ENCODE measurements at regions of chr6 and their contacts with region 1.

Region 1: GRCh38 chr6:12011276-12012076 is 636 bp upstream of the HIVEP1 start:
- DNase-seq: peak; percentile 81
- ATAC-seq: peak; percentile 74
- H3K4me3 ChIP-seq: no peak overlapping the region
- H3K27ac ChIP-seq: peak overlapping the region; percentile 97; the same call in 1 of the 2 replicates
- H3K4me1 ChIP-seq: peaks cover 8% of the 10 kb centered on the region
- H3K27me3 ChIP-seq: no peaks in the 10 kb centered on the region
- CTCF ChIP-seq: no peak
- EP300 ChIP-seq: peak in 1 of 2 experiments; percentile 47; a peak in 1 of 4 replicates
- POLR2A ChIP-seq: peak; percentile 77
- RAD21 ChIP-seq: no peak

Region 2: GRCh38 chr6:11700118-11700718 is 311.3 kb before region 1 on chr6:
- CTCF ChIA-PET with region 1: interaction called, 3 read pairs
- POLR2A ChIA-PET with region 1: no interaction called
- RAD21 ChIA-PET with region 1: interaction called, 3 read pairs
- SMC1A ChIA-PET with region 1: interaction called, 7 read pairs
- in situ Hi-C with region 1: loop called (anchors 25 kb)
- intact Hi-C with region 1: no loop called
- DNase-seq: no peak
- ATAC-seq: peak; percentile 70
- H3K4me3 ChIP-seq: no peak overlapping the region
- H3K27ac ChIP-seq: no peak overlapping the region
- H3K4me1 ChIP-seq: peaks cover 4% of the 10 kb centered on the region
- H3K27me3 ChIP-seq: no peaks in the 10 kb centered on the region
- CTCF ChIP-seq: peak; percentile 35 to 50 (median 35); a peak in 3 of 6 replicates
- EP300 ChIP-seq: no peak
- POLR2A ChIP-seq: no peak
- RAD21 ChIP-seq: peak; percentile 82

Region 3: GRCh38 chr6:11732036-11732631 is 279.3 kb before region 1 on chr6:
- CTCF ChIA-PET with region 1: no interaction called
- POLR2A ChIA-PET with region 1: interaction called, 3 read pairs
- RAD21 ChIA-PET with region 1: interaction called, 11 read pairs
- SMC1A ChIA-PET with region 1: interaction called, 6 read pairs
- in situ Hi-C with region 1: no loop called
- intact Hi-C with region 1: loop called (anchors 5 kb)
- DNase-seq: peak; percentile 99
- ATAC-seq: peak; percentile 87
- H3K4me3 ChIP-seq: no peak overlapping the region
- H3K27ac ChIP-seq: peak overlapping the region; percentile 89
- H3K4me1 ChIP-seq: peaks cover 43% of the 10 kb centered on the region
- H3K27me3 ChIP-seq: no peaks in the 10 kb centered on the region
- CTCF ChIP-seq: no peak
- EP300 ChIP-seq: peak; percentile 86 to 94
- POLR2A ChIP-seq: peak; percentile 56
- RAD21 ChIP-seq: peak; percentile 47

Region 4: GRCh38 chr6:11833626-11834592 is 177.6 kb before region 1 on chr6:
- CTCF ChIA-PET with region 1: no interaction called
- POLR2A ChIA-PET with region 1: interaction called, 5 read pairs
- RAD21 ChIA-PET with region 1: interaction called, 13 read pairs
- SMC1A ChIA-PET with region 1: interaction called, 12 read pairs
- in situ Hi-C with region 1: loop called (anchors 5 kb)
- intact Hi-C with region 1: loop called (anchors 1 kb)
- DNase-seq: peak; percentile 84
- ATAC-seq: peak; percentile 84
- H3K4me3 ChIP-seq: peak overlapping the region; percentile 0; the same call in 1 of the 2 replicates
- H3K27ac ChIP-seq: peak overlapping the region; percentile 95
- H3K4me1 ChIP-seq: peaks cover 45% of the 10 kb centered on the region
- H3K27me3 ChIP-seq: no peaks in the 10 kb centered on the region
- CTCF ChIP-seq: no peak
- EP300 ChIP-seq: peak; percentile 97 to 100
- POLR2A ChIP-seq: peak; percentile 41; the same call in 1 of the 2 replicates
- RAD21 ChIP-seq: peak; percentile 42; the same call in 1 of the 2 replicates

Region 5: GRCh38 chr6:11929241-11929850 is 82.1 kb before region 1 on chr6:
- CTCF ChIA-PET with region 1: no interaction called
- POLR2A ChIA-PET with region 1: no interaction called
- RAD21 ChIA-PET with region 1: no interaction called
- SMC1A ChIA-PET with region 1: no interaction called
- in situ Hi-C with region 1: no loop called
- intact Hi-C with region 1: no loop called
- DNase-seq: no peak
- ATAC-seq: no peak
- H3K4me3 ChIP-seq: no peak overlapping the region
- H3K27ac ChIP-seq: no peak overlapping the region
- H3K4me1 ChIP-seq: no peaks in the 10 kb centered on the region
- H3K27me3 ChIP-seq: no peaks in the 10 kb centered on the region
- CTCF ChIP-seq: no peak
- EP300 ChIP-seq: no peak
- POLR2A ChIP-seq: no peak
- RAD21 ChIP-seq: no peak

Region 6: DNA sequence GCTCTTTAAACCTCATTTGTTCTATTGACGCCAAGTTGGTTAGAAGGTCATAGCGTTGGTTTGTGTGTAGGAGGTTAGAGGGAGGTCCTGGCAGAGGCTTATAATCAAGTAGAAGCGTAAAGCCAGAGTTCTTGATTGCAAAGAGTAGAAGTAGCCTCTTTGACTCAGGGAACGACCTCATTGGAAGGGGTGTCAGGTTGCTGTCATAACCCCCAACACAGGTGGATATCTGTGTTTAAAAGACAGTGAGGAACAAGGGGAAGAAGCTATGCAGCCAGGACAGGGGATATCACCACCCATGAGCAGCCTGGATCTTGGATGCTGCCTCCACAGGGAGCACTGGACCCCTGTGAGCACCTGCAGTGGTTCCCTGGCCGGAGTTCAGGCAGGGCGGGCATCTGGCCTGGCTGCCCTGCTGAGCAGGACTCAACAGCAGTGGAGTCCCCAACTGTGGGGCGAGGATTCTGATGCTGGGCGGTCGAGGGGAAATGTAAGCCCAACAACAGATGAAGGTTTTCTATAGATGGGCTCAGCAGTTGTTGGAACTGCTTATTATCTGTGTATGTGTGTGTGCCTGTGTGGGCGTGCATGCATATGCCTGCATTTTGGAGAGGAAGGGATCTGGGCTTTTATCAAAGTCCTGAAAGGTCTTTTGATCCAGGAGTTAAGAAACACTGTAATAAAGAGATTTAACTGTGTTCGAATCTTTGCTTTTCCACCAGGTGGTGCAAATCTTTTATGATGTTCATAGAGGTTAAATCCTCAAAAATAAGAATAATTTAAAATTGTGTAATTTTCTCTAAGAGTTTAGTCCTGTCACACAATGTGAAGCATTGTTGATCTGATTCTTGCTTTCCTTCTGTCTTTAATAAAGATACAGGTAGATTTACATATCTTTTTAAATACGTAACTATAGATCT is 28.3 kb after region 1 on chr6:
- CTCF ChIA-PET with region 1: interaction called, 11 read pairs
- POLR2A ChIA-PET with region 1: interaction called, 3 read pairs
- RAD21 ChIA-PET with region 1: interaction called, 4 read pairs
- SMC1A ChIA-PET with region 1: interaction called, 11 read pairs
- in situ Hi-C with region 1: no loop called
- intact Hi-C with region 1: no loop called
- DNase-seq: no peak
- ATAC-seq: no peak
- H3K4me3 ChIP-seq: no peak overlapping the region
- H3K27ac ChIP-seq: no peak overlapping the region
- H3K4me1 ChIP-seq: peaks cover 23% of the 10 kb centered on the region
- H3K27me3 ChIP-seq: no peaks in the 10 kb centered on the region
- CTCF ChIP-seq: no peak
- EP300 ChIP-seq: no peak
- POLR2A ChIP-seq: no peak
- RAD21 ChIP-seq: no peak

Region 7: GRCh38 chr6:12075067-12075563 is 63.6 kb after region 1 on chr6:
- CTCF ChIA-PET with region 1: interaction called, 5 read pairs
- POLR2A ChIA-PET with region 1: no interaction called
- RAD21 ChIA-PET with region 1: interaction called, 77 read pairs
- SMC1A ChIA-PET with region 1: interaction called, 28 read pairs
- in situ Hi-C with region 1: no loop called
- intact Hi-C with region 1: no loop called
- DNase-seq: no peak
- ATAC-seq: peak; percentile 63
- H3K4me3 ChIP-seq: no peak overlapping the region
- H3K27ac ChIP-seq: no peak overlapping the region
- H3K4me1 ChIP-seq: peaks cover 3% of the 10 kb centered on the region
- H3K27me3 ChIP-seq: no peaks in the 10 kb centered on the region
- CTCF ChIP-seq: peak; percentile 30 to 53 (median 40); a peak in 4 of 6 replicates
- EP300 ChIP-seq: no peak
- POLR2A ChIP-seq: no peak
- RAD21 ChIP-seq: peak; percentile 65

Region 8: DNA sequence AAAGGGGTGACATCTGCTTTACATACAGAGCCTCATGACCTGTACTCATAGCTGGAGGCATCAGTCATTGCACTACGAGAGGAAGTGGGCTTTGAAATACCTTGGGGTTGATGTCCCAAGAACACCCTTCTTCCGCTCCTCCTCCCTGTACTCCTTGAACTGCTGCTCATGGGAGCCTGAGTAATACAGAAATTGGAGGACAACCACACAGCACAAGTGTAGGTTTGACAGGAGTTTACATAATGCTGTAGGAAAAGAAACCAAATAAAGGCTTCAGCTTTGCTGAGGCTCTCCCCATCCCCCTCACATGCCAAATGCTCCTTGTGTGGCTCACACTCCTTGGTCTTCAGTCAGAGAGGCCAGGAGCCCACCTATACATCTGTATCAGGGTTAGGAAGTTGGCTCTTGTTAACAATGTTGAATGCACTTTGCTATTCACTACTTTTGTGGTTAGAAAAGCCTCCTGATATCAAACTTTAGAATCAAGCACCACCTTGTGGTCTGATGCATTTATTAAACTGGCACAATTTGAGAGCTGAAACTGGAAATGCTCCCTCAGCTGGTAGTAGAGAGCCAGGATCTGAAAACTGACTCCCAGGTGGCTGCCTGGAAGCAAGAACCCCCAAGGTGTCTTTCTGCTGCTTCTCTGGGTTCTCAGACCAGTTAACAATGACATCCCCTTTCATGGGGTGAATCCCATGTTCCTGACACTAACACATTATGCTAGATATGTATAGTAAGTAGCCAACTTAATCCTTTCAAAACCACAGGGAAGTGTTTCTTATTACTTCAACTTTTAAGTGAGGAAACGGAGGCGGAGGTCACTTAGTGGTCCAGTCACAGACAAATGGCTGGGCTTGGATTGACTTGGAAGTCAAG is 222.5 kb after region 1 on chr6:
- CTCF ChIA-PET with region 1: interaction called, 6 read pairs
- POLR2A ChIA-PET with region 1: no interaction called
- RAD21 ChIA-PET with region 1: no interaction called
- SMC1A ChIA-PET with region 1: interaction called, 3 read pairs
- in situ Hi-C with region 1: no loop called
- intact Hi-C with region 1: loop called (anchors 10 kb)
- DNase-seq: peak; percentile 66
- ATAC-seq: peak; percentile 89
- H3K4me3 ChIP-seq: no peak overlapping the region
- H3K27ac ChIP-seq: peak overlapping the region; percentile 65
- H3K4me1 ChIP-seq: peaks cover 22% of the 10 kb centered on the region
- H3K27me3 ChIP-seq: no peaks in the 10 kb centered on the region
- CTCF ChIP-seq: peak; percentile 46 to 64 (median 54); a peak in 5 of 6 replicates
- EP300 ChIP-seq: no peak
- POLR2A ChIP-seq: no peak
- RAD21 ChIP-seq: peak; percentile 73

Region 9: GRCh38 chr6:13635948-13636658 is 1624.6 kb after region 1 on chr6:
- CTCF ChIA-PET with region 1: no interaction called
- POLR2A ChIA-PET with region 1: no interaction called
- RAD21 ChIA-PET with region 1: no interaction called
- SMC1A ChIA-PET with region 1: no interaction called
- in situ Hi-C with region 1: no loop called
- intact Hi-C with region 1: no loop called
- DNase-seq: no peak
- ATAC-seq: no peak
- H3K4me3 ChIP-seq: no peak overlapping the region
- H3K27ac ChIP-seq: no peak overlapping the region
- H3K4me1 ChIP-seq: no peaks in the 10 kb centered on the region
- H3K27me3 ChIP-seq: no peaks in the 10 kb centered on the region
- CTCF ChIP-seq: no peak
- EP300 ChIP-seq: no peak
- POLR2A ChIP-seq: no peak
- RAD21 ChIP-seq: no peak